B cell (primary cell): ENCODE measurements at regions of chr1 and their contacts with region 1.

Region 1: GRCh38 chr1:234978397-234979295 is 150.0 kb downstream of the TOMM20 start:
- DNase-seq: peak; percentile 87
- ATAC-seq: peak; percentile 74
- H3K4me3 ChIP-seq: peak overlapping the region in 3 of 5 experiments; percentile 18 to 42 (median 34)
- H3K4me3 Mint-ChIP-seq: peak overlapping the region; percentile 88
- H3K27ac ChIP-seq: peak overlapping the region; percentile 64 to 73
- H3K27ac Mint-ChIP-seq: peak overlapping the region; percentile 98
- H3K4me1 ChIP-seq: peaks cover 42 to 52% of the 10 kb centered on the region in 2 donors
- H3K4me1 Mint-ChIP-seq: peaks cover 62% of the 10 kb centered on the region
- H3K27me3 ChIP-seq: no peaks in the 10 kb centered on the region
- H3K27me3 Mint-ChIP-seq: no peaks in the 10 kb centered on the region
- CTCF ChIP-seq: peak; percentile 22

Region 2: DNA sequence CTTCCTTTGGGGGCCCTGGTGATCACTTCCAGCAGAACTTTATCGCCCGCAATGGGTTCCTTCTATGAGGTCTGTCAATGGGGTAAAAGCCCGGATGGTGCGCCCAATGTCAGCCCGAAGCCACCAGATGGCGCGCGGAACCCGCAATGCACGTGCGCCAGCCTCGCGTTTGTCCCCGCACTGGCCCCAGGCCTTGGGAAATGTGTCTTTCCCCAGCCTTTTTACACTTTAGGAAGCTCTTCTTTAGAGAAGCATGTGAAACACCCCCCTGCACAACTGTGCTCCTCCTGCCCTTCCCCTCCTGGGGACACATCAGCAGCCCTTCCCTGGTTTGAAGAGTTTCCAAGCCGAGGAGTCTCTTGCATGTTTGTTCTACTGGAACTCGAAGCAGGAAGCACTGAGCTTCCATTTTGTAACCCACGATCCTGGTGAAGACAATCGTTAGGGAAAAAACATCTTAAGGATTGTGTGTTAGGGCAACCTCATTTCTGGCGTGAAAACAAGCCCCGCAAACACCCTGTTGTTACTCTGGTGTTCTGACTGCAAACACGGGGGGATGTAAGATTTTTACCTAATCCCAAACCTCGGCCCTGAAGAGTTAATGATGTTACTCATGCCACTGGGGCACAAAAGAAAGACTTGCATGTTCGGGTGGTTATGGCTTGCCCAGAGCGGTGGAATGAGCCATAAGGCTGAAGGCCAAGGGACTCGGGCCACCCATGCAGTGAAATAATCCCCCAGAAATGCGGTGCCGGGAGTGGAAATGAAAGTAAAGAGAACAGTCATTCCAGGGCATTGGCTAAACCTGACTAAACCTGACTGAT is 479.3 kb before region 1 on chr1:
- CTCF ChIA-PET with region 1: interaction called, 23 read pairs
- POLR2A ChIA-PET with region 1: interaction called, 4 read pairs
- intact Hi-C with region 1: loop called (anchors 10 kb)
- DNase-seq: peak; percentile 86
- ATAC-seq: peak; percentile 97
- H3K4me3 ChIP-seq: peak overlapping the region in 2 of 5 experiments; percentile 2 to 27
- H3K4me3 Mint-ChIP-seq: peak overlapping the region; percentile 67
- H3K27ac ChIP-seq: no peak overlapping the region
- H3K27ac Mint-ChIP-seq: peak overlapping the region; percentile 70
- H3K4me1 ChIP-seq: peaks cover 3 to 15% of the 10 kb centered on the region in 2 donors
- H3K4me1 Mint-ChIP-seq: peaks cover 25% of the 10 kb centered on the region
- H3K27me3 ChIP-seq: no peaks in the 10 kb centered on the region
- H3K27me3 Mint-ChIP-seq: no peaks in the 10 kb centered on the region
- CTCF ChIP-seq: peak; percentile 92

Region 3: DNA sequence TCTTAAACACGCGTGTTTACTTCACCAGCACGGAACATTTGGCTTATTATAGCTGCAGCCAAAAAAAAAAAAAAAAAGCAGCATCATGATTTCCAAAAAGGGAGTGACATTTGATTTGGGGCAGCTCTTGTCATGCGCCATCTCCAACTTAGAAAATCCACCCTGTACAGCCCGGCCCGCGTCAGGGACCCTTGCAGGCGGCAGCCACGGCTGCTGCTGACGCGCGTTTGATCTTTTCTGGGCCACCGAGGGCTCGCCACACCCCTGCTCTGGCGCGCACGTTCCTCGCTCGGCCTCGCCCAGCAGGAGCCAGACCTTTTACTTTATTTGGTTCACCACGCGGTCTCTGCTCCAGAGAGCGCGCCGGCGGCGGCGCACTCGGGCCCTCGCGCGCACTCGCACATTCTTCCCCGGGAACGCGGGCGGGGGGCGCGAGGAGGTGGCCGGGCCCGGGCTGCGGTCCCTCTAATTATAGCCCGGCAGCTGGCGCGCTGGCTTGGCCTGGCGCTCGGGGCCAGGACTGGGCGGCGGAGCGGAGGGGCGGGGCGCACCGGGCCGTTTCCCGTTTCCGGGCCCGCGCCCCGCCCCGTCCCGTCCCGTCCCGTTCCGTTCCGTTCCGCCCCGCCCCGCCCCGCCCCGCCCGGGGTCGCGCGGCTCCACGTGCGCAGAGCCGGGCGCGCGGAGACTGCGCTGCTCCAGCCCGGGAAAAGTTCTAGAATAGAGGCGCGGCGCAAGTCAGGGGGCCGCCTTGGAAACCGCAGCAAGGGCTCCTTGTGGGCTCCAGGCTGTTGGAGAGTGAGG is 378.8 kb before region 1 on chr1:
- CTCF ChIA-PET with region 1: interaction called, 13 read pairs
- POLR2A ChIA-PET with region 1: interaction called, 8 read pairs
- intact Hi-C with region 1: no loop called
- DNase-seq: peak; percentile 89
- ATAC-seq: peak; percentile 73
- H3K4me3 ChIP-seq: peak overlapping the region; percentile 56 to 84 (median 66)
- H3K4me3 Mint-ChIP-seq: peak overlapping the region; percentile 90
- H3K27ac ChIP-seq: peak overlapping the region; percentile 83 to 93
- H3K27ac Mint-ChIP-seq: peak overlapping the region; percentile 97
- H3K4me1 ChIP-seq: peaks cover 53 to 54% of the 10 kb centered on the region in 2 donors
- H3K4me1 Mint-ChIP-seq: peaks cover 54% of the 10 kb centered on the region
- H3K27me3 ChIP-seq: no peaks in the 10 kb centered on the region
- H3K27me3 Mint-ChIP-seq: no peaks in the 10 kb centered on the region
- CTCF ChIP-seq: no peak

Region 4: GRCh38 chr1:234722904-234723720 is 255.5 kb before region 1 on chr1:
- CTCF ChIA-PET with region 1: interaction called, 3 read pairs
- POLR2A ChIA-PET with region 1: no interaction called
- intact Hi-C with region 1: loop called (anchors 5 kb)
- DNase-seq: peak; percentile 62
- ATAC-seq: no peak
- H3K4me3 ChIP-seq: no peak overlapping the region
- H3K4me3 Mint-ChIP-seq: peak overlapping the region; percentile 70
- H3K27ac ChIP-seq: peak overlapping the region in 1 of 2 donors; percentile 17
- H3K27ac Mint-ChIP-seq: peak overlapping the region; percentile 70
- H3K4me1 ChIP-seq: peaks cover 35 to 50% of the 10 kb centered on the region in 2 donors
- H3K4me1 Mint-ChIP-seq: peaks cover 47% of the 10 kb centered on the region
- H3K27me3 ChIP-seq: no peaks in the 10 kb centered on the region
- H3K27me3 Mint-ChIP-seq: no peaks in the 10 kb centered on the region
- CTCF ChIP-seq: no peak

Region 5: GRCh38 chr1:234755449-234755863 is 223.2 kb before region 1 on chr1:
- CTCF ChIA-PET with region 1: no interaction called
- POLR2A ChIA-PET with region 1: no interaction called
- intact Hi-C with region 1: no loop called
- DNase-seq: no peak
- ATAC-seq: no peak
- H3K4me3 ChIP-seq: no peak overlapping the region
- H3K4me3 Mint-ChIP-seq: no peak overlapping the region
- H3K27ac ChIP-seq: no peak overlapping the region
- H3K27ac Mint-ChIP-seq: no peak overlapping the region
- H3K4me1 ChIP-seq: no peaks in the 10 kb centered on the region
- H3K4me1 Mint-ChIP-seq: peaks cover 2% of the 10 kb centered on the region
- H3K27me3 ChIP-seq: no peaks in the 10 kb centered on the region
- H3K27me3 Mint-ChIP-seq: no peaks in the 10 kb centered on the region
- CTCF ChIP-seq: no peak

Region 6: GRCh38 chr1:234925440-234926263 is 53.0 kb before region 1 on chr1:
- CTCF ChIA-PET with region 1: no interaction called
- POLR2A ChIA-PET with region 1: no interaction called
- intact Hi-C with region 1: loop called (anchors 5 kb)
- DNase-seq: no peak
- ATAC-seq: no peak
- H3K4me3 ChIP-seq: no peak overlapping the region
- H3K4me3 Mint-ChIP-seq: peak overlapping the region; percentile 81
- H3K27ac ChIP-seq: no peak overlapping the region
- H3K27ac Mint-ChIP-seq: peak overlapping the region; percentile 88
- H3K4me1 ChIP-seq: peaks cover 28 to 41% of the 10 kb centered on the region in 2 donors
- H3K4me1 Mint-ChIP-seq: peaks cover 31% of the 10 kb centered on the region
- H3K27me3 ChIP-seq: no peaks in the 10 kb centered on the region
- H3K27me3 Mint-ChIP-seq: no peaks in the 10 kb centered on the region
- CTCF ChIP-seq: no peak

Region 7: DNA sequence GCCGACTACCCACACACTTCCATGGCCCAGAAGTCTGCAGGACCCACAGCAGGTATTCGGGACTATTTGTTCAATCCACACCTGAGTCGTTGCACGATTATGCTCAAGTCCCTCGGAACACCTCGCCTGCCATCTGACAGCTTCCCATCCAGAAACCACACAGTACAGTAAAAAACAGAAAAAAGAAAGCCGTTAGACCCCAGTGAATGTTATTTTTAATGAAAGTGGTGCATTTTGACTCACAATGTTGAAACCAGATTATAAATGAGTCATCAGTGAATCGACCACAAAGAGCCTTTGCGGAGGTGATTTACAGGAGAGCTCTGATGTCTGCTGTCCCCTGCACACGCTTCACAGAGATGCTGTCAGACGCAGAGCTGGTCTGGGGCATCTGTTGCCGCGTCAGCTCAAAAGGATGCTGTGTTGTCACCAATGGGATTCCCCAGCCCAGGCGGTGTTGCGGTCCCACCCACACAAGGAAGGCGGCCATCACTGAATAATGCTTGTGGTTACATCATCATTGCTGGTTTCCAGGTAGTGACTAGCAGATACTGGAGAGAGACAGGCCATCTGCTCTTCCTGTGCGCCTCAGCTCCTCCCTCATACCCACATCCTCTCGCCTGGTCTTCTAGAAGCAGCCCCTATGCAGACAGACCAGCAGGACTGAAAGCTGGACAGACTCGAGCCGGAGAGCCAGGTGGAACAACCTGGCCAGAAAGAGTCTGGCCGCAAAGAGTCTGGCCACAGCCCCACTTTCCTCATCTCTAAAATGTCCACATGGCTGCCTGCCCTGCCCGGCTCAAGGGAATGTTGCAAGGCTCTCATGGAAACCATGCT is 33.2 kb after region 1 on chr1:
- CTCF ChIA-PET with region 1: interaction called, 15 read pairs
- POLR2A ChIA-PET with region 1: interaction called, 30 read pairs
- intact Hi-C with region 1: loop called (anchors 1 kb)
- DNase-seq: peak; percentile 97
- ATAC-seq: peak; percentile 87
- H3K4me3 ChIP-seq: peak overlapping the region; percentile 23 to 52 (median 32)
- H3K4me3 Mint-ChIP-seq: peak overlapping the region; percentile 76
- H3K27ac ChIP-seq: peak overlapping the region; percentile 89 to 96
- H3K27ac Mint-ChIP-seq: peak overlapping the region; percentile 96
- H3K4me1 ChIP-seq: peaks cover 50 to 65% of the 10 kb centered on the region in 2 donors
- H3K4me1 Mint-ChIP-seq: peaks cover 82% of the 10 kb centered on the region
- H3K27me3 ChIP-seq: no peaks in the 10 kb centered on the region
- H3K27me3 Mint-ChIP-seq: no peaks in the 10 kb centered on the region
- CTCF ChIP-seq: no peak

Region 8: DNA sequence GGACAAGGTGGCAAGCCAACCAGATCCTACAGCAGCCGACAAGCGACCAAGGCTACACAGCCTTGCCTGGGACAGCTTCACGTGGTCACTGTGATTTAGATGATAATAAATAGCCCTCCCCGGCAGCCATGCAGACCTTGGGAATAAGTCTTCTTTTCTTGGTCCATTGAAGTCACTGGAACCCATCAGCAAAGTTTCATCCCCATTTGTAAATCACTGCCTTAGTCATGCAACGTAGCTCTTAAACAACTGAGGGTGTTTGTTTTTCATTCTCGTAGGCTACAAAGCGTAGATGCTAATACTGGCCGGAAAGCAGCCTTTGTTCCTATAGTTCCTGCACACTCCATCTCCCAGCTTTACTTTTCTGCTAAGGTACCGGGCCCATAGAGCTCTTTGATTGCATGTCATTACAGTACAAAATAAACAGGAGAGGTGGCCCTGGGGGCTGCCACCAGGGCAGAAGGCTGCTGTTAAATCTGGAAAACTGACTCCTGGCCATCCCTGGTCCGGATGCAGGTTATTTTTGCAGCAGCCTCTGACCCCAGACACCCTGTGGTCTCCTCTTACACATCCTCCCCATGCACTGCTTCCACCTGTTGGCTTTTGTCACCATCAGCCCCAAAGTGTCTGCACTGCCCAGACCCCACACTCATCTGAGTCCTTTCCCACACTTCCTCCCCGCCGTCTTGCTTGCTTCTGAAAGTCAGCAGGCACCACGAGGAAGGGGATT is 44.5 kb after region 1 on chr1:
- CTCF ChIA-PET with region 1: no interaction called
- POLR2A ChIA-PET with region 1: no interaction called
- intact Hi-C with region 1: no loop called
- DNase-seq: no peak
- ATAC-seq: no peak
- H3K4me3 ChIP-seq: no peak overlapping the region
- H3K4me3 Mint-ChIP-seq: no peak overlapping the region
- H3K27ac ChIP-seq: no peak overlapping the region
- H3K27ac Mint-ChIP-seq: no peak overlapping the region
- H3K4me1 ChIP-seq: peaks cover 0 to 6% of the 10 kb centered on the region in 2 donors
- H3K4me1 Mint-ChIP-seq: peaks cover 32% of the 10 kb centered on the region
- H3K27me3 ChIP-seq: no peaks in the 10 kb centered on the region
- H3K27me3 Mint-ChIP-seq: no peaks in the 10 kb centered on the region
- CTCF ChIP-seq: no peak